Activated naive CD4-positive, alpha-beta T cell treated with anti-CD3 and anti-CD28 coated beads for 36 hours (primary cell): ENCODE measurements at regions of chr5 and their contacts with region 1.

Region 1: GRCh38 chr5:179697993-179698934 is 503 bp upstream of the CANX start:
- DNase-seq: peak; percentile 99
- H3K4me3 Mint-ChIP-seq: peak overlapping the region; percentile 95
- H3K27ac Mint-ChIP-seq: peak overlapping the region; percentile 97
- H3K4me1 Mint-ChIP-seq: peaks cover 37% of the 10 kb centered on the region
- H3K27me3 Mint-ChIP-seq: no peaks in the 10 kb centered on the region

Region 2: GRCh38 chr5:178626484-178627258 is 1071.6 kb before region 1 on chr5 and contains the start of gene CLK4:
- CTCF ChIA-PET with region 1: no interaction called
- intact Hi-C with region 1: loop called (anchors 2 kb)
- DNase-seq: peak; percentile 97
- H3K4me3 Mint-ChIP-seq: peak within 1 kb of the TSS; percentile 97
- H3K27ac Mint-ChIP-seq: peak within 1 kb of the TSS; percentile 95
- H3K4me1 Mint-ChIP-seq: peaks cover 28% of the 10 kb centered on the region
- H3K27me3 Mint-ChIP-seq: no peaks in the 10 kb centered on the region
- total RNA-seq, gene CLK4: 33.9 to 34.9 TPM

Region 3: DNA sequence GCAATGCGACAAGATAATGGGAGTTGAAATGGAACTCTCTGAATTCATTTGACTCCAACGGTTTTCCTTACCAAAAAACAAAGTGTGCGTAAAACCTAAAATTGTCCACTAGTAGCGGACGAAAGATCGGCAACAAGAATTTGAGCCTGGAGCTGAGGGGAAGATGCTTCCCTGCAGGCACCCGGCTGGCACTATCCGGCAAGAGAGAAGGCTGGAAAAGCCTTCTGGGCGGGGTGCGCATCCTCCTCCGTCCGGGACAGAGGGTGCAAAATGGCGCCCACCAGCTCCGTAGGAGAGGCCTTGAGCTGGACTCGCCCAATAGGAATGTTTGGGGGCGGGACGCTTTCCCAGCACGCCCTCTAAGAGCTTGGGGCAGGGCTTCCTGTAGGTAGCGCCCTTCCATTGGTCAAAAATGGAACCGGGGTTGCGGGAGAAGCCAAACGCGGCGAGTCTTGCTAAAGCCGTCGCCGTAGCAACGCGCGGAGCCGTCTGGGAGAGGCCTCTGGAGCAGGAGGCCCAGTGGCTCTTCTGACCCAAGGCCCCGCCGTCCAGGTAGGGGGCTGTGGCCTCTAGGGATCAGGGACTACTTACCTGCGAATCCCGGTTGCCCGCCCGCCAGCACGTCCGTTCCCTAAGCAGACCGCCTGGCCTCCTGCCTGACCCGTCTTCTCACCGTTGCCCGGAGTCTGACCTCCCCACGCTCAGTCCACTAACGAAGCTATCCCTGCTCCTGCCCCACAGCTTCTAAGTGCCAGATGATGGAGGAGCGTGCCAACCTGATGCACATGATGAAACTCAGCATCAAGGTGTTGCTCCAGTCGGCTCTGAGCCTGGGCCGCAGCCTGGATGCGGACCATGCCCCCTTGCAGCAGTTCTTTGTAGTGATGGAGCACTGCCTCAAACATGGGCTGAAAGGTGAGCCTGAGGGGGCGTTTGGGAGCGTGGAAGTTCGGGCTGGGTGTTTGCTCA is 138.7 kb before region 1 on chr5:
- CTCF ChIA-PET with region 1: no interaction called
- intact Hi-C with region 1: loop called (anchors 1 kb)
- DNase-seq: peak; percentile 98
- H3K4me3 Mint-ChIP-seq: peak overlapping the region; percentile 93
- H3K27ac Mint-ChIP-seq: peak overlapping the region; percentile 91
- H3K4me1 Mint-ChIP-seq: peaks cover 14% of the 10 kb centered on the region
- H3K27me3 Mint-ChIP-seq: no peaks in the 10 kb centered on the region

Region 4: DNA sequence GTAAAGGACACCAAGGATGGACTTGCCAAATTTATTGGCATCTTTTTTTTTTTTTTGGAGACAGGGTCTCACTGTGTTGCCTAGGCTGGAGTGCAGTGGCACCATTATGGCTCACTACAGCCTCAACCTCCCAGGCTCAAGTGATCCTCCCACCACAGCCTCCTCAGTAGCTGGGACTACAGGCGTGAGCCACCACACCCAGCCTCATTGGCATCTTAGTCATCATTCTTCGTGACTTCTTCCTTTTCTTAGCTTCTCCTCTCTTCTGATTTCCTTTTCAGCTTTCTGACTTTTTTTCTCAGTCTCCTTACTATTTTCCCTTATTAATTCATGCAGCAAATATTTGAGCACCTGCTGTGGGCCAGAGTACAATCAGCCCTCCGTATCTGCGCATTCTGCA is 40.5 kb after region 1 on chr5:
- CTCF ChIA-PET with region 1: no interaction called
- intact Hi-C with region 1: no loop called
- DNase-seq: no peak
- H3K4me3 Mint-ChIP-seq: no peak overlapping the region
- H3K27ac Mint-ChIP-seq: no peak overlapping the region
- H3K4me1 Mint-ChIP-seq: peaks cover 58% of the 10 kb centered on the region
- H3K27me3 Mint-ChIP-seq: no peaks in the 10 kb centered on the region

Region 5: DNA sequence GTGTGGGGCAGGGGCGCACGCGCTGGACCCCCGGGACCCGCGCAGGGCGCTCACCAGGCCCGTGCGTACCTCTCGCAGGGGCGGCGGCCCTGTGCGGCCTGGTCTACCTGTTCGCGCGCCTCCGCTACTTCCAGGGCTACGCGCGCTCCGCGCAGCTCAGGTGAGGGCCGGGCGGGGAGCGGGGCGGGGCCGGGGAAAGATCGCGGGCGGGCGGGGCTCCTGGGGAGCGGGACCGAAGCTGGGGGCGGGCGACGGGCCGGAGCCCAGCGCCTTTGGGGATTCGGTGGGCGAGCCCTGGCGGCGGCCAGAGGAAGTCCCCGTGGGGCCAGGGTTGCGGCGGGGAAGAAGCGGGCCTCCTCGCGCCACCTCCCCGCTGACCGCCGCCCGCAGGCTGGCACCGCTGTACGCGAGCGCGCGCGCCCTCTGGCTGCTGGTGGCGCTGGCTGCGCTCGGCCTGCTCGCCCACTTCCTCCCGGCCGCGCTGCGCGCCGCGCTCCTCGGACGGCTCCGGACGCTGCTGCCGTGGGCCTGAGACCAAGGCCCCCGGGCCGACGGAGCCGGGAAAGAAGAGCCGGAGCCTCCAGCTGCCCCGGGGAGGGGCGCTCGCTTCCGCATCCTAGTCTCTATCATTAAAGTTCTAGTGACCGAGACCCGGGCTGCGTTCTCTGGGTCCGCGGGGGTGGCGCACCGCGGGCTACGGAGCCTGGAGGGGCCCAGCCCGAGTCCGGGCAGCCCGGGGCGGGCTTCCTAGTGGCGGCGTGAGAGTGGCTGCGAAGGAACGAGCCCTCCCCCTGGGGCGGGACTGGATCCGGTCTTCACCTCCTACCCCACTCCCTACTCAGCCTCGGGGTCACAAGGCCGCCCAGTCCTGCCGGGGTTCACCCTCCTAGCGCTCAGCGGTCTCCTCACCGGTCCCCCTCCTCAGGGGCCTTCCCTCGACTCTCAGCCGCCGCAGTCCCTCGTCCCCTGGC is 97.9 kb after region 1 on chr5:
- CTCF ChIA-PET with region 1: interaction called, 3 read pairs
- intact Hi-C with region 1: loop called (anchors 1 kb)
- DNase-seq: peak; percentile 73
- H3K4me3 Mint-ChIP-seq: peak overlapping the region; percentile 59
- H3K27ac Mint-ChIP-seq: no peak overlapping the region
- H3K4me1 Mint-ChIP-seq: peaks cover 23% of the 10 kb centered on the region
- H3K27me3 Mint-ChIP-seq: no peaks in the 10 kb centered on the region

Region 6: GRCh38 chr5:179858586-179859427 is 160.5 kb after region 1 on chr5 and contains the start of gene MRNIP:
- CTCF ChIA-PET with region 1: no interaction called
- intact Hi-C with region 1: loop called (anchors 1 kb)
- DNase-seq: peak; percentile 93
- H3K4me3 Mint-ChIP-seq: peak within 1 kb of the TSS; percentile 93
- H3K27ac Mint-ChIP-seq: peak within 1 kb of the TSS; percentile 82
- H3K4me1 Mint-ChIP-seq: peaks cover 14% of the 10 kb centered on the region
- H3K27me3 Mint-ChIP-seq: no peaks in the 10 kb centered on the region
- total RNA-seq, gene MRNIP: 16.2 to 16.3 TPM

Region 7: DNA sequence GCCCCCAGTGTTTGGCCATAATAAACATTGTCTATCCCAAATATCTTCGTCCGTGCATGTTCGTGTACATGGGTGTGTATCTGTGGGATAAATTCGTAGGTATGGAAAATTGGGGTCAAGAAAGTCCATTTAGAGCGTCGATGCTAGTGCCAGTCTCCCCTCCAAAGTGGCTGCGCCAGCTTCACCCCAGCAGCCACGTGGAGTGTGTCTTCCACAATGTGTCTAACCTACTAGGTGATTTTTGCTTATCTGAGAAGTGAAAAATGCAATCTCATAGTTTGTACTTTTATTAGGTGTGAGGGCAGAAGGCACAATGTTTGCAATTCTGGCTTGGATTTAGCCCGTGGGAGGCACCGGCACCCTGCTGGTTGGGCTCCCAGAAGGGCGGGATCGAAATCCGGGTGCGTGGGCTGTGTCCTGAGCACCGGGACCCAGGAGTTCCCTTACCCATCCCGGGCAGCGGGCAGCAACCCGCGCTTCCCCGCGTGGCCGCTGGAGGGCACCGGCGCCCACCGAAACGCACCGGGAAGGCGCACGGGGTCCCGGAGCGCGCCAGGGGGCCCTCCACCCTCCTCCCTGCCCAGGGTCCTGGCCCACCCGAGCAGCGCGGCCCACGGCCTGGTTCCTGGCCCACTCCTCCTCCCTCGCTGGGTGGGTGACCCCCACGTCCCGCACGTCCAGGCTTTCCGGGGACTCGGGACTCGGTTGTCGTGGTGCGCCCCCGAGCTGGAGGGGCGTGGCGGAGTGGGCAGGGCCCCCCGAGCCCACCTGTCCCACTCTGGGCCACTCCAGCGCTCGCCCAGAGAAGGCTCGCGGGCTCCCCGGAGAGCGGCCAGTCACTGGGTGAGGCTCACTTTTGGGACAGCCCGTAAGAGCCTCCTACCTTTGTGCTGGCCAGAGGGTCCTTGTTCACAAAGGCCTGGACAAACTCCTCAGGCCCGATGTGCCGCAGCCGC is 428.7 kb after region 1 on chr5:
- CTCF ChIA-PET with region 1: no interaction called
- intact Hi-C with region 1: no loop called
- DNase-seq: peak; percentile 38
- H3K4me3 Mint-ChIP-seq: no peak overlapping the region
- H3K27ac Mint-ChIP-seq: no peak overlapping the region
- H3K4me1 Mint-ChIP-seq: no peaks in the 10 kb centered on the region
- H3K27me3 Mint-ChIP-seq: peaks cover 12% of the 10 kb centered on the region